Activated B cell treated with CpG ODN at 0.5 μM for 24 hours (primary cell): ENCODE measurements at regions of chrX and their contacts with region 1.

Region 1: GRCh38 chrX:10119399-10119990 is 37.3 kb upstream of the CLCN4 start:
- DNase-seq: peak; percentile 33
- ATAC-seq: peak; percentile 33
- H3K4me3 Mint-ChIP-seq: peak overlapping the region; percentile 42
- H3K27ac Mint-ChIP-seq: peak overlapping the region; percentile 89
- H3K4me1 Mint-ChIP-seq: peaks cover 74% of the 10 kb centered on the region
- H3K27me3 Mint-ChIP-seq: no peaks in the 10 kb centered on the region
- CTCF ChIP-seq: peak; percentile 89

Region 2: GRCh38 chrX:8743126-8743732 is 1376.3 kb before region 1 on chrX:
- CTCF ChIA-PET with region 1: no interaction called
- POLR2A ChIA-PET with region 1: no interaction called
- intact Hi-C with region 1: loop called (anchors 5 kb)
- DNase-seq: peak; percentile 27
- ATAC-seq: no peak
- H3K4me3 Mint-ChIP-seq: no peak overlapping the region
- H3K27ac Mint-ChIP-seq: no peak overlapping the region
- H3K4me1 Mint-ChIP-seq: no peaks in the 10 kb centered on the region
- H3K27me3 Mint-ChIP-seq: no peaks in the 10 kb centered on the region
- CTCF ChIP-seq: no peak

Region 3: DNA sequence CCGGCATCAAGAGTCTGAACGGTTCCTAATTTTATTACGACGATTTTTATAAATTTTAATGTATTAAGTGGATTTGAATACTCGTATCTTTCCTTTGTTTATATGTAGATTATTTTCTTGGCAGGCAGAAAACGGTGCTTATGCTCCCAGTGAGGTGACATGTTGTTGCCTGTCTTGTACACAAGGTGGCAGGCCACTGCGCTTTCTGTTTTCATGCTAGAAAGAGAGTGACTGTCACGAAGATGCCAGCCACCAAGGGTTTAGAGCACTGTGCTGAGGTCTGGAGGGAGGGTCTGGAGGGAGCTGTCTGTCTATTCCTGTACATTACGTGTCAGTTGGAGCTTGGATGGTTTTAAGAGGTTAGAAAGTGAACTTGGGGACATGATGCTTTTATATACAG is 245.5 kb before region 1 on chrX:
- CTCF ChIA-PET with region 1: interaction called, 8 read pairs
- POLR2A ChIA-PET with region 1: no interaction called
- intact Hi-C with region 1: loop called (anchors 1 kb)
- DNase-seq: peak; percentile 16
- ATAC-seq: peak; percentile 72
- H3K4me3 Mint-ChIP-seq: no peak overlapping the region
- H3K27ac Mint-ChIP-seq: no peak overlapping the region
- H3K4me1 Mint-ChIP-seq: peaks cover 2% of the 10 kb centered on the region
- H3K27me3 Mint-ChIP-seq: peaks cover 9% of the 10 kb centered on the region
- CTCF ChIP-seq: no peak

Region 4: DNA sequence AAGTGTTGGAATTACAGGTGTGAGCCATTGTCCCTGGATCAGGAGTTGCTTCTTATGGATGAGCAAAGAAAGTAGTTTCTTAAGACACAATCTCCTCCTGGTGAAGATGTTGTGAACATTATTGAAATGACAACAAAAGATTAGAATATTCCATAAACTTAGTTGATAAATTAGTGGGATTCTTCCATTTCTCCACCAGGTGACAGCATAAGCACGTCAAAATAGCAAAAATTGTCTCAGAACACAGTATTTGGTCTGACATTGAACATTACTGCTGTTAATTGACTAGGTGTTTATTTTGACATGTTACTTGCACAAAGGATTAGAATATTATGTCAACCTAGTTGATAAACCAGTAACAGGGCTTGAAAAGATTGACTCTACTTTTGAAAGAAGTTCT is 130.7 kb before region 1 on chrX:
- CTCF ChIA-PET with region 1: interaction called, 18 read pairs
- POLR2A ChIA-PET with region 1: interaction called, 3 read pairs
- intact Hi-C with region 1: no loop called
- DNase-seq: no peak
- ATAC-seq: no peak
- H3K4me3 Mint-ChIP-seq: no peak overlapping the region
- H3K27ac Mint-ChIP-seq: no peak overlapping the region
- H3K4me1 Mint-ChIP-seq: peaks cover 17% of the 10 kb centered on the region
- H3K27me3 Mint-ChIP-seq: no peaks in the 10 kb centered on the region
- CTCF ChIP-seq: no peak

Region 5: GRCh38 chrX:10007621-10008020 is 111.9 kb before region 1 on chrX:
- CTCF ChIA-PET with region 1: interaction called, 23 read pairs
- POLR2A ChIA-PET with region 1: interaction called, 20 read pairs
- intact Hi-C with region 1: loop called (anchors 1 kb)
- DNase-seq: no peak
- ATAC-seq: no peak
- H3K4me3 Mint-ChIP-seq: no peak overlapping the region
- H3K27ac Mint-ChIP-seq: no peak overlapping the region
- H3K4me1 Mint-ChIP-seq: peaks cover 41% of the 10 kb centered on the region
- H3K27me3 Mint-ChIP-seq: no peaks in the 10 kb centered on the region
- CTCF ChIP-seq: no peak

Region 6: DNA sequence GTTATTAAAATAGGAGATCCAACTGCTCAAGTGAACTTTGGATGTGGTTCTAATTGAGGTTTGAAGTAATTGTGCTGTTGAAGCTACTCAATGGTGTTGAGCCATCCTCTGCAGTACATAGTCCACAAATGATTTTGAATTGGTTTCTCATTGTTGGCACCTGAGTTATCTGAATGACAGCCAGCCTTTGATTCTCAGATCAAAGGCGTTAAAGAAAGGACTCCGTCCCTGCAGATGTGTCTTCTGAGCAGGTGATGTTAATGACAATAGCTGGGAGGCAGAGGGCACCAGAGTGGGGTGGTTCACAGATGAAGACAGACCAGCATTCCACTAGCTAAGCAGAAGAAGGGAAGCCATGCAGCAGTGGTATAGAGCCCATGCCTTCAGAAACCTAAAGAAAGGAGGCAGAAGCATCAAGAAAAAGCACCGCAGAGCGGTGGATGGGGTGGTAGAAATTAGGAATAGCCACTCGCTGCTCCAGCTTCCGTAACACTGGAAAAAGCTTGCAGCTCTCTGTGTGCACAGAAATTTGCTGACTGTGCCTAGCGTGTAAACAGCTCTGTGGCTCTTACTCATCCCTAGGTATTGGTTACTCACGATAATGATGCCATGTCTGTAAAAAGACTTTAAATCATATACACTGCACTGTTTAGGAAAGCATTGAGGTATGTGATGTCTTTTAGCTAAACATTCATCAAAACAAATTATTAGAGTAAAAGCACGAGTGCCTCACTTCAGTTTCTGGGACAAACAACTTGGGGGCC is 41.9 kb before region 1 on chrX:
- CTCF ChIA-PET with region 1: interaction called, 18 read pairs
- POLR2A ChIA-PET with region 1: interaction called, 122 read pairs
- intact Hi-C with region 1: loop called (anchors 1 kb)
- DNase-seq: no peak
- ATAC-seq: no peak
- H3K4me3 Mint-ChIP-seq: no peak overlapping the region
- H3K27ac Mint-ChIP-seq: no peak overlapping the region
- H3K4me1 Mint-ChIP-seq: peaks cover 13% of the 10 kb centered on the region
- H3K27me3 Mint-ChIP-seq: no peaks in the 10 kb centered on the region
- CTCF ChIP-seq: no peak

Region 7: DNA sequence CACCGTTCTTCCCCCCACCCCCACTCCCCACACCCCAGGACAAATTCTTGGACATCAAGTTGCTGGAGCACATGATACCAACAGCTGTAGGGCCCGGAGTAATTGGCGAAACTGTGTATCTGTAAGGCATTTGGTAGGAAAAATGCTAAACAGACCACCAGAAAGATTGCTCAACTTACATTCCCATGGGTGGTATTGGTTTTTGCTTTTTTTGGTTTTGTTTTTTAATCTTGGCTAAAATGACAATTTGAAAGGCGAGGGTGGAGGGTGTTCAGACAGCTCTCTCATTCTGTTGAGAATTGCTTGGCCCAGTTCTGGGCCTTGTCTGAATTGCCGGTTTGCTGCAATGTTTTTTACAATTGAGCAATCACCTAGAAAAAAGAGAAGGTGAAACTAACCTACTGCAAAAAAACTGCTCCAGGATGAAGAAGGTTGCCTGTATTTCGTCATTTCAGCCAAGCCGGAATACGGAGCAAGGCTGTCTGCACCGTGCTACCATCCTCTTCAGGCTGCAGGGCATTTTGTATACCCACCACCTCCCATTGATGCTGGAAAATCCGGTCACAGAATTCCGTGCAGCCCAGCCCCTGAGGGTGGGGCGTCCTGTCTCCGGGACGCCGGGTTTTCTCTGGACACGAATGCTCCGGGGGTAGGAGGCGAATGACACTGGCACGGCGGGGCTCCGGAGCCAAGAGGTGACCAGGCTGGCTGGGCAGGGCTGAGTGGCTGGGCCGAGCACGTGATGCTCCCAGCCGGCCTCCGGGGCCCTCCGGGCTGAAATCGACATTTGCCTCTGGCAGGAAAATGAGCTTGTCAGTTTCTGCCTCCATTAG is 36.9 kb after region 1 on chrX and contains the start of gene CLCN4:
- CTCF ChIA-PET with region 1: interaction called, 9 read pairs
- POLR2A ChIA-PET with region 1: interaction called, 12 read pairs
- intact Hi-C with region 1: loop called (anchors 1 kb)
- DNase-seq: peak; percentile 26
- ATAC-seq: peak; percentile 65
- H3K4me3 Mint-ChIP-seq: peak within 1 kb of the TSS; percentile 83
- H3K27ac Mint-ChIP-seq: peak within 1 kb of the TSS; percentile 90
- H3K4me1 Mint-ChIP-seq: peaks cover 34% of the 10 kb centered on the region
- H3K27me3 Mint-ChIP-seq: no peaks in the 10 kb centered on the region
- CTCF ChIP-seq: no peak
- total RNA-seq, gene CLCN4: 3.4 and 4.7 TPM in 2 replicates

Region 8: GRCh38 chrX:10288384-10288975 is 169.0 kb after region 1 on chrX:
- CTCF ChIA-PET with region 1: no interaction called
- POLR2A ChIA-PET with region 1: no interaction called
- intact Hi-C with region 1: no loop called
- DNase-seq: no peak
- ATAC-seq: no peak
- H3K4me3 Mint-ChIP-seq: no peak overlapping the region
- H3K27ac Mint-ChIP-seq: no peak overlapping the region
- H3K4me1 Mint-ChIP-seq: no peaks in the 10 kb centered on the region
- H3K27me3 Mint-ChIP-seq: peaks cover 10% of the 10 kb centered on the region
- CTCF ChIP-seq: no peak